ENCODE measurements at regions of chrX and their contacts with region 1.

Region 1: GRCh38 chrX:9995855-9996339 is 28.7 kb downstream of the CLDN34 start:
- DNase-seq: peak; percentile 57 to 71
- ATAC-seq: peak; percentile 86 to 98
- H3K4me3 ChIP-seq: no peak overlapping the region
- H3K27ac ChIP-seq: no peak overlapping the region
- H3K4me1 ChIP-seq: no peaks in the 10 kb centered on the region
- H3K27me3 ChIP-seq: no peaks in the 10 kb centered on the region
- CTCF ChIP-seq: peak; percentile 88 to 97 (median 91)
- POLR2A ChIP-seq: no peak

Region 2: DNA sequence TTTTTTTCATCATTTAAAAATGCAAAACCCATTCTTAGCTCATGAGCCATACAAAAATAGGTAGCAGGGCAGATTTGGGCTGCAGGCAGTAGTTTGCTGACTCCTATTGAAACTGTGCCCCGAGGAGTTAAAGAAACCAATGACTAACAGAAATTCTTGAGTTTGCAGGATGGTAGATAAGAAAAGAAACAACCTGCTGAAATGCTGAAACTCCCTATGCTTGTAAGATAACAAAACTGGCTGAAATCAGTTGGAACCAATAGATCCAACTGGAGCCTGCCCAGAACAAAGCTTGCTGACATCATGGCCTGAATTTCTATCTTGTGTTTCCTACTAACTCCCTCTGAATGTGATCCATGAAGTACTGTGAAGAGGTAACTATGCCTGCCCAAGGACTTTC is 1332.6 kb before region 1 on chrX:
- in situ Hi-C with region 1: no loop called
- intact Hi-C with region 1: no loop called
- DNase-seq: no peak
- ATAC-seq: no peak
- H3K4me3 ChIP-seq: no peak overlapping the region
- H3K27ac ChIP-seq: no peak overlapping the region
- H3K4me1 ChIP-seq: no peaks in the 10 kb centered on the region
- H3K27me3 ChIP-seq: no peaks in the 10 kb centered on the region
- CTCF ChIP-seq: no peak
- POLR2A ChIP-seq: no peak

Region 3: DNA sequence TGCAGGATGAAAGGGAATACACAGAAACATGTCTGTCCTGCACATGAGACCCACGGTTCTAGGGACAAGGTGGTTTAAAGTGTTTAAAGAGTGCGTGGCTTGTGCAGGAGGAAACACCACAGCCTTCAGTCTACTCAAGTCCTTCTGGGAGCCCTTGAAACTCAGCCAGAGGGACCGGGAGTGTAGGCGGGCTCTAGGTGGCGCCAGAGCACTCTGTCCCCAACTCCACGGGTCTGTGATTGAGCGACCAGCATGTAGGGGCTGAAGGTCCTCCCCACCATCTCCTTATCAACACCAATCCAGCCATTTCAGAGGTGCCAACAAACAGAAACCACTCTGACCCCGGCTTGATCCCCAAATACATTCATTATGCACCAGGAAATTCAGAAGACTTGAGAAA is 110.7 kb before region 1 on chrX:
- in situ Hi-C with region 1: loop called in 1 of 4 experiments (anchors 25 kb)
- intact Hi-C with region 1: no loop called
- DNase-seq: peak; percentile 11 to 22
- ATAC-seq: no peak
- H3K4me3 ChIP-seq: no peak overlapping the region
- H3K27ac ChIP-seq: no peak overlapping the region
- H3K4me1 ChIP-seq: no peaks in the 10 kb centered on the region
- H3K27me3 ChIP-seq: no peaks in the 10 kb centered on the region
- CTCF ChIP-seq: peak in 2 of 5 experiments; percentile 22 to 47
- POLR2A ChIP-seq: no peak